Posterior cingulate gyrus (tissue), 11 donors: ENCODE measurements at regions of chr11 and their contacts with region 1.

Region 1: DNA sequence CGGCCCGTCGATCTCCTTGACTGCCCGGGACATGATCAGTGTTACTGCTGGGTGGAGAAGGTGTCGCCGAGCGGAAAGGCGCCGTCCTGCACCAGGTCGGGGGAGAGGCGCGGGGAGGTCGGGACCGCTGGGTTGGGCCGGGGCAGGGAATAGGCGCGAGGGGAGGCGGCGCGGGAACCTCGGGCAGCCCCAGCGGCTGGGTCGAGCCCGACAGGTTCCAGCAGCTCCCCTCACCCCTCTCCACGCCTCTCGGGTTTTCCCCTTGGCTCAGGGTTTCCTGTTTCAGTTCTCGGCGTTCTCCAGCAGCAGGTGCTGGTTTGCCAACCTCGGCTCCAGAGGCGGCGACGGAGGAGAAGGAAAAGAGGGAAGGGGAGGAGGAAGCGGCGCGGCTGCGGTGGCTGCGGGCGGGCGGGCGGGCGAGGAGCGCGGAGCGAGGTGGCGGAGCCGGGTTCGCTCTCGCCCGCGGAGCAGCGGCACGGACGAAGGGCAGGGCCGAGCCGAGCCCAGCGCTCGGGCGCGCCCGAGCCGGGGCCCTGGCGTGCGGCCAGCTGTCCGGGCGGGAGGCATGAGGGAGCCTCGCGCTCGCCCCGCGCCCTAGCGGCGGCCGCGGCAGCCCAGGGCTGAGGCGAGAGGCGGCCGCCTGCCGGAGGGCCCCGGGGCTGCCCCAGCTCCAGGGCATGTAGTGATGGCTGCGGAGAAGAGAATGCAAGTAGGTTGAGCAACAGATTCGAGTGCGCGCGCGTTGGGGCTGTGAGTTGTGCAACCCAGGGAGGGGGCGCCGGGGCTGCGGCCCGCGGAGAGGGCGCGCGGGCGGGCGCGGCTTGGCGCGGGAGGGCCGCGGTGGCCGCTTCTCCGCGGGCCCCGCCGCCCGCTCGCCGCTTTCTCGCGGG is at the start of gene ZC3H12C:
- DNase-seq: peak; percentile 64 to 96 (median 78)

Region 2: DNA sequence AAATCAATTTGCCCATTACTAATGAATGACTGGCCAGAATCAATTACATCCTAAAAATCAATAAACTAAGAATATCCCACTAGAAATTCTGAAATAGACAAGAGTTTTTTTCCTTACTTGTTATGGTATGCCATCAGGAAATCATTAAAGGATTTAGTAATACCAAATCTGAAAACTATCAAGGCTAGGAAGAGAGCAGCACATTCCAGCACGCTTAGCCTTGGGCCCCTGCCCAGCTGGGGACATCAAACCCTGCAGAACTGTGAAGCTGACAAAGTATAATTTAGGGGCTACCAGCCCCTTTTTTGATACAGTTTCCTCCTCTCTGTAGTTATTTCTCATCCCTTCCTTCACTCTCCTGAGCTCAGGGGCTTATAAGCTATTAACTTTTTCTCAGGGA is 247.3 kb before region 1 on chr11:
- intact Hi-C with region 1: no loop called
- DNase-seq: no peak

Region 3: DNA sequence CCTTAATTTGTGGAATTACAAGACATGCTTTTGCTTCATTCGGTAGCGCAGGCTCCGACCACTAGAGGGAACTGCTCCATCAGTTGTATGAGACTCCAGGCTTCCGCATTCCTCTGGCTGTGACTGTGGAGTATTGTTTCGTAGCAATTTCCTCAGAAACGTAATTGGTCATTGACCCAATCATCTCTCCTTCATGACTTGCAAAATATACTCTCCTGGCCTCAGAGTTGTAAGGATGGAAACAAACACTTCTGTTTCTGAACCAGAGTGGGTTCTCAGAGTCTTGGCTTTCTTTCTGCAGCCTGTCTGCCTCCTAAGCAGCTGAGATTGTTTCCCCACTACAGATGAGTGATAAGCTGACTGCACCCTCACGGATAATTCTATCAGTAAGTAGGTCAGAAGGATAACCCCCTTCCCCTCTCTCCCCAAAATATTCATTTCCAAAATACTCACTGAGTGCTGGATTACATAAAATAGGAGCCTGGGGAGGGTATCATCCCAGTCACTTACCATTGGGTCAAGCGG is 146.4 kb before region 1 on chr11:
- intact Hi-C with region 1: loop called (anchors 2 kb)
- DNase-seq: peak; percentile 59 to 97 (median 85)

Region 4: DNA sequence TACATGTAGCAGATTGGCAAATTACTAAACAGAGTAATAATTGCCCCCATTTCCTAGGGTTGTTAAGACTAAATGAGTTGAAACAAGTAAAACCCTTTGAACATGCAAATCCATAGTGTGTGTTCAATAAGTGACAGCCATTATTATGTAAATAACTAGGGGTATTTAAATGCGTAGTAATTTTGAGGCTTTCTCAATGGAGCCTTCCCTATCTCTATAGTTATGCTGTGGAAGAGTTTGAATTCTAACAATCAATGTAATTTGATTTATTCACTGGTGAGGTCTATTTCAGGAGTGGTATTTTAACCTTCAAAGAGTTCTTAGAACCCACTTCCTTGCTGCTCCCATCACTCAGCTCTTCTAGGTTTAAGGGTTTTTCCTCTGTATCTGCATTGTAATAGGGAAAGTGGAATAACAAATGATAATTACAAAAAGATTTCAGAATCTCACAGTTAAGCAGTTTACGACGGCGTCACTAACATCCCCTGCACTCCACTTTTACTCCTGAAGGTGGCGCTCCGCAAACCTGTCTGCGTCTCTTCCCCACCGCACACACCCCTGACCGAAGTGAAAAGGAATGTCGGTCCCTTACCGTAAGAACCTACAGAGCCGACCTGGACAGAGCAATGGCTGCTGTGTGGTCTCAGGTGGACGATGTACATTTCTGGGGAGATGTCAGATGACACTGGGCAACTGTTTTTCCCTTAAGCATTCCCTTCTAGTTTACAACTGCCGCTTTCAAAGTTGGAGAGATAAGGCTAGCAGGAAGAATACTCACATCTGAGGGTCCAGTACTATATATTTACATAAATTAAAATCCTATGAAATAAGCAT is 81.3 kb after region 1 on chr11:
- intact Hi-C with region 1: loop called (anchors 10 kb)
- DNase-seq: peak in 7 of 10 donors; percentile 32 to 88 (median 73)

Region 5: DNA sequence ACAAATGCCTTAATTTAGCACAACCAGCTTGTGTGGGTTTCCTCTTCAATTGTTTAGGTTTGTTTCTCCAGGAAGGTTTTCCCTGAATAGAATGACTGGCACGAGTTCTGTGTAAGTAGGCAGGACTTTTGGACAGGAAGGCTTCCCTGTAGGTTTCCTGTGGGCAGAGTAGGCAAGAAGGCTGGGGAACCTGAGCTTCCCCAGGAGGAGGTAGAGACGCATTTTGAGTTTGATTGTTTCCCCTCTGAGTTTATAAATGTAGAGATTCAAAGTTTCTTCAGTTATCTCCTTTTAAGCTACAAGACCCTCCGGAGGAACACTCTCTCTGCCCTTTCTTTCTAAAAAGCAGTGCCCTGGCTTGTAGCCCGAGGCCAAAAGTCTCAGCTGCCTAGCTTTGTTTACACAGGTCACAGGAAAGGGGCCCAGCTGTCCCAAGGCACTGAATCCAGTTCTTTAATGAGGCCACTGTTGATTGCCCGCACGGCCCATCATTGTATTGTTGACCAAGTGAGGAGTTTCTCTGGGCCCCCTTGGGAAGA is 270.3 kb after region 1 on chr11:
- intact Hi-C with region 1: loop called (anchors 10 kb)
- DNase-seq: peak in 3 of 10 donors; percentile 26 to 82 (median 49)